Activated CD4-positive, alpha-beta memory T cell treated with anti-CD3 and anti-CD28 coated beads, Interleukin-2, amount 10 ng/mL, durations not matched to agents 7 days and 5 days (primary cell): ENCODE measurements at regions of chr9 and their contacts with region 1.

Region 1: DNA sequence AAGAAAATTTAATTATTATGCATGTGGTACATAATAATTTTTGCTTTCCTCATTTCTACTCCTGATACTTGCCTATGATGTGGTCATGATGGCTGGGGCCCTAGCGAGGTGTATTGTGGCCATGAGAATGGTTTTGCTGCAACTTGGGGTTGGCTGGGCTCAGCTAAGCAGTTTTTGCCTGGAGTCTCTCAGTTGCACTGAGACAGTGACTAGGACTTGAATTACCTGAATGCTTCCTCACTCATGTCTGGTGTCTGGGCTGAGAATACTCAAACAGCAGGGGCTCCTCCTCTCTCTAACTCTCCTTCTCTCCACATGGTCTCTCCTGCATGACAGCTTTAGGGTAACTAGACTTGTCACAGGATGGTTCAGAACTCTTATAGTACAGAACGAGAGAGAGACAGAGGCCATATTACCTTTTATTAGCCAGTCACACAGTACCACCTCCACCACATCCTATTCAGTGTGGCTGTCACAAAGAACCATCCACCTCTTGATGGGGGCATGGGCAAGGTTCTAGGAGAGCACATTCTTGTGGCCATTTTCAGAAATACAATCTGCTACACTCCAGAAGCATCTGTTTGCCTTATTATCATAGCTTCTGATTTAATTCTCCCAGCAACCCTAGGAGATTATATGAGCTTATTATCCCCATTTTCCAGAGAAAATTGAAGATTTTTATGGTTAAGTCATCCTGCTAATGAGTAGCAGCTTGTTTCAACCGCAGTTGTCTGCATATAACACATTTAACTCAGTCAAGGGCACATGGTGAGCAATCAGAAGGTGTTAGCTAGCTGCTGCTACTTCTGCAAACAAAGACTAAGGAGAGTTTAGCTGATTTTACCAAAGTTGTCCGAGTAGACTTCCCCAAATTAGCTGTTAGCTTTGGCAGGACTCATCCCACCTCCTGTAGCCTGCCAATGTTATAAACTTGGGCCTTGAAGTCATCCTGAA is 245.1 kb downstream of the DOCK8 start:
- DNase-seq: peak; percentile 40
- H3K4me3 Mint-ChIP-seq: no peak overlapping the region
- H3K27ac Mint-ChIP-seq: peak overlapping the region; percentile 79
- H3K4me1 Mint-ChIP-seq: peaks cover 38% of the 10 kb centered on the region
- H3K27me3 Mint-ChIP-seq: no peaks in the 10 kb centered on the region

Region 2: DNA sequence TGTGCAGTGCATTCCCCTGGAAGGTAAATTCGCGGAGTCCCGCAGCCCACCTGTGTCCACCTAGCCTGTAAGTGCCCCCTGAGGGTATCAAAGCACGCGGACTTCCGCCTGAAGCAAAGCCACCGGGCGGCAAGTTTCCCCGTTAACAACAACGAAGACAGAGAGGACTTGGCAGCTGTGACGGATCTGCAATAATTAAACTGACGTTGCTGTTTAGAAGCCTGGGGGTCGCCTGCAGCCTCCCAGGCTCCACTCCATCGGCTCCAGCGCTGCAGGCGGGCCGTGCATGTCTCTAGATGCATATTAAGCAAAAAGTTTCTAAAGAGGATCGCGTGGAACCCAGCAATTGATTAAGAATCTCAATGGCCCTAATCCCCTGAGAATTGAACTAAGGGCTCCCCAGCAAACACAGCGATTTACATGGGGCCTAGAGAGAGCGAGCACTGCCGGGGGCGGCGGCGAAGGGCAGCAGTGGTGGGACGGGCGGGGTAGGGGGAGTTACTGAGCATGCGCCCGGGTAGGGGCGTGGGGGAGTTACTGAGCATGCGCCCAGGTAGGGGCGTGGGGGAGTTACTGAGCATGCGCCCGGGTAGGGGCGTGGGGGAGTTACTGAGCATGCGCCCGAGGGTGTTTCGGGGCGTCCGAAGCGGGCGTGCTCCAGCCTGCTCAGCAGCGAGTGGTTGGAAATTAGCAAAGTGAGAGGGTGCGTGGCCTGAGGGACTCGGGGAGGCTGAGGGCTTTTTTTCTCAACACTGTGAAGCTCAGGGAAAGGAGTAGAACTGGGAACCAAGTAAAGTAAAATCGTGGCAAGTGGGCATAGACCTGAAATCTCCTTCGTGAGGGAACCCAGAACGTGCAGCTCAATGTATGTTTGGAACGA is 10.1 kb after region 1 on chr9:
- CTCF ChIA-PET with region 1: interaction called, 6 read pairs
- POLR2A ChIA-PET with region 1: interaction called, 19 read pairs
- DNase-seq: peak; percentile 92
- H3K4me3 Mint-ChIP-seq: peak overlapping the region; percentile 90
- H3K27ac Mint-ChIP-seq: peak overlapping the region; percentile 80
- H3K4me1 Mint-ChIP-seq: peaks cover 28% of the 10 kb centered on the region
- H3K27me3 Mint-ChIP-seq: no peaks in the 10 kb centered on the region

Region 3: DNA sequence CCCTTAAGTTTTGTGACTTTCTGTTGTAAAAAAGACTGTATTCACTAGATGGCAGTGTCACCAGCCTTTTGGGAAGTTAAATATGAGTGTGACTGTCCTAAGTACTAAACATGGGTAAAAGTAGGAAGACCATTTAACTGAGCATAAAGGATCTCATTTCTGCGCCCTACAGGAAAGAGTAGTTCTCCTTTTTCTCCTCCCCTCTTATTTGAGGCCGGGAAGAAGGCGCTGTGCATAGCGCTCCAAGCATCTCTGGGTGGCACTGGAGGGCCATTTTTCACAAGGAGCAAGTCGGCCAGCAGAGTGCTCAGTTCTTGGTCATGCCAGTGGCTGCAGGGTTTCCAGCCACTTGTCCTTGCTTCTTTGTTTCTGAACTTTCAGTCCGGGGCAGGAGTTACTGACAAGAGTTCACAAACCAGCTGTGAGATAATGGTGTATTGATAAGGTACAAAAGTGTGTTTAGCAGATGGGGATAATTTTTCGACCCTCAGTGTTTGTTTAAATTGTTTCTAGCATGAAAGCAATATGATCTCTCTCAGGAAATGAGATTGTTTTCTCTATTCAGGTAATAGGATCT is 154.1 kb after region 1 on chr9:
- CTCF ChIA-PET with region 1: no interaction called
- POLR2A ChIA-PET with region 1: no interaction called
- DNase-seq: peak; percentile 43
- H3K4me3 Mint-ChIP-seq: no peak overlapping the region
- H3K27ac Mint-ChIP-seq: no peak overlapping the region
- H3K4me1 Mint-ChIP-seq: peaks cover 5% of the 10 kb centered on the region
- H3K27me3 Mint-ChIP-seq: no peaks in the 10 kb centered on the region